WTC11 (cell line): ENCODE measurements at regions of chr4 and their contacts with region 1.

Region 1: GRCh38 chr4:54233277-54233696 is 4.2 kb downstream of the PDGFRA start:
- DNase-seq: peak; percentile 84
- ATAC-seq: peak; percentile 57
- H3K4me3 Mint-ChIP-seq: peak overlapping the region; percentile 82
- H3K27ac Mint-ChIP-seq: no peak overlapping the region
- H3K4me1 Mint-ChIP-seq: peaks cover 32% of the 10 kb centered on the region
- H3K27me3 Mint-ChIP-seq: peaks cover 76% of the 10 kb centered on the region
- CTCF ChIP-seq: peak; percentile 7; the same call in 1 of the 2 replicates

Region 2: DNA sequence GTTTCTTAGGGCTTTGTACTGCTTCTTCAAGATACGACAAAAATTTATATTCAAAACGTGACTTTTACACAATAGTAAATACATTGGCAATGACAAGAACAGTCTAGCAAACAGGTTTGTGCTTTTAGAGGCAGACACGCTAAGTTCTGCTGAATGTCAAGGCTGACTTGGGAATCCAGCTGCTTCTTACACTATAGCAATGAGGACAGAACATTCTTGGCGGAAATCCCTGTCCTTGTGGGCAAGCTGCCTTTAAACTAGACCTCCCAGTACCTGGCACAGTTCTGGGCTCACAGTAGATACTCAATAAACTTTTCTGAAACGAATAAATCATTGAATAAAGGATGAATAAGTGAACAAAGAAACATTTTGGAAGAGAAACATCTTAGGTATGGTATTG is 1223.0 kb before region 1 on chr4:
- CTCF ChIA-PET with region 1: interaction called, 15 read pairs
- POLR2A ChIA-PET with region 1: no interaction called
- DNase-seq: no peak
- ATAC-seq: no peak
- H3K4me3 Mint-ChIP-seq: no peak overlapping the region
- H3K27ac Mint-ChIP-seq: no peak overlapping the region
- H3K4me1 Mint-ChIP-seq: peaks cover 8% of the 10 kb centered on the region; the same call in 1 of the 2 replicates
- H3K27me3 Mint-ChIP-seq: no peaks in the 10 kb centered on the region; the same call in 1 of the 2 replicates
- CTCF ChIP-seq: no peak

Region 3: DNA sequence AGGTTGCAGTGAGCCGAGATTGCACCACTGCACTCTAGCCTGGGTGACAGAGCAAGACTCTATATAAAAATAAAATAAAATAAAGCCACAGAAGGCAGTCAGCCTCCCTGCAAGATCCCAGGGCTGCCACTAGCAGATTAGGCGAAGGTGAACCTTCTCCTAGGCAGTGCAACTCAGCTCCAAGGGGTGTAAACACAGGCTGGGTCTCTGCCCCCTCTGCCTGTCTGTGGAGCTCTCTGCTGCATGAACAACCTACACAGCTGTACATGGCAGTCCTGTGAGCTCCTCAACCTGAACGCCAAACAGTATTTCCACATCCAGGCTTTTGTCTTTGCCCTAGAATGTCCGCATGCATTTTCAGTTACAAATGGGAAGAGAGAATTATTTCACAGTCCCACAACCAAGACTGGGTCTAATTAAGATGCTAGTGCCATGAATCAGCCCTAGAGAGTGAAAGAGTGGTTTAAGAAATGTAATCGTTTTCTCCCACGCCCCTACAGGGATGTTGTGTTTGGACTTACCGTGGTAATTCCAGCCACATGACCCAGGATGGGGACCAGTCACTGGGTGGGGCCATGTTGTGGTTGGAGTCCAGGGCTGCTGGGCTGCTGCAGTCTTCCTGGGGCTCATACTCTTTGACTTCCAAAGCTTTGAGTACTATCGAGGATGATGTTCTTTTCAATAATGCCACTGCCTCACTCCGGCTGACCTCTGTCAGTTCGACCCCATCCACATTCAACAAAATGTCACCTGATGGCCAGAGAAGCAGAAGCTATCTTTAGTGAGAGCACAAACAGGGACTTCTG is 756.9 kb before region 1 on chr4:
- CTCF ChIA-PET with region 1: interaction called, 11 read pairs
- POLR2A ChIA-PET with region 1: no interaction called
- DNase-seq: no peak
- ATAC-seq: peak; percentile 54
- H3K4me3 Mint-ChIP-seq: peak overlapping the region; percentile 18
- H3K27ac Mint-ChIP-seq: peak overlapping the region; percentile 96
- H3K4me1 Mint-ChIP-seq: peaks cover 57% of the 10 kb centered on the region
- H3K27me3 Mint-ChIP-seq: no peaks in the 10 kb centered on the region
- CTCF ChIP-seq: no peak

Region 4: DNA sequence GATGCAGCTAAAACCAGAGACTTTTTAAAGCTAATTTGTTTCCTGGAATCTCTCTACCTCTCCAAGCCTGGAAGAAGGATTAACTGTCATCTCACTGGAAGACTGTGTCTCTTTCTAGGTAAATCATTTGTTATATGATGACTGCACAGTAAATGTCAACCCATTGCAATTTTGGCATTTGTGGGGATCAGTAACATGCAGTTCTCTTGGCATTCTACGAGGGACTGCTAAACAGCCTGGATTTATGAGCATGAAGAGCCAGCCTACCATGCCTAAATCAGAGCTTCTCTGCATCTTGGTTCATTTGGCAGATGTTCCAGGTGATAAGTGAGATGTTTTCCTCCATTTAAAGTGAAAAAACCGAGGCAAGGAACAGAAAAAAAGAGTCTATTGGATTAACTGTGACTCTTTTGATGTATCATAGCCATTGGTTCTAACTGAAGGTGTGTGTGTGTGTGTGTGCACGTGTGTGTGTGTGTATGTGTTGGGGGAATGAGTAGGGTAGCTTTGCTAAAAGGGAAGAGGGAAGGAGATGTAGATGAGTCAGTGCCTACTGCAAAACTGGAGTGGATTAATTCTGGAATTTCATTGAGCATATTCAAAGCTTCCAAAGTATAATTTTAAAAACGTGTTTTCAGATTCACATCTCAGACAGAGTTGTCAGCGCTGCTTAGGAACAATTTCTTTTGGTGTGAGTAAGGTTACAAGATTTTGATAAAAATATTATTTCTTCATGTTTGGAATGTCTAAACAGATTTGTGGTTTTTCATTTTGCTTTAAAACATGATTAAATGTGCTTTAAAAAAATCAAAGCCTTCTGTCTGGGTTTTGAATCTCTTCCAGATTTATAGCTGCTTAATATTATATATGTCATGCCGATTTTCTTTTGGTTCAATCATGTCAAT is 518.8 kb before region 1 on chr4:
- CTCF ChIA-PET with region 1: interaction called, 76 read pairs
- POLR2A ChIA-PET with region 1: no interaction called
- DNase-seq: no peak
- ATAC-seq: no peak
- H3K4me3 Mint-ChIP-seq: no peak overlapping the region
- H3K27ac Mint-ChIP-seq: no peak overlapping the region
- H3K4me1 Mint-ChIP-seq: peaks cover 15% of the 10 kb centered on the region
- H3K27me3 Mint-ChIP-seq: no peaks in the 10 kb centered on the region
- CTCF ChIP-seq: no peak

Region 5: GRCh38 chr4:53920116-53920515 is 313.2 kb before region 1 on chr4:
- CTCF ChIA-PET with region 1: interaction called, 111 read pairs
- POLR2A ChIA-PET with region 1: no interaction called
- DNase-seq: peak; percentile 13
- ATAC-seq: peak; percentile 78
- H3K4me3 Mint-ChIP-seq: no peak overlapping the region
- H3K27ac Mint-ChIP-seq: no peak overlapping the region
- H3K4me1 Mint-ChIP-seq: peaks cover 30% of the 10 kb centered on the region
- H3K27me3 Mint-ChIP-seq: peaks cover 4% of the 10 kb centered on the region
- CTCF ChIP-seq: no peak

Region 6: GRCh38 chr4:54107951-54108873 is 125.1 kb before region 1 on chr4:
- CTCF ChIA-PET with region 1: interaction called, 44 read pairs
- POLR2A ChIA-PET with region 1: no interaction called
- DNase-seq: no peak
- ATAC-seq: no peak
- H3K4me3 Mint-ChIP-seq: peak overlapping the region; percentile 71
- H3K27ac Mint-ChIP-seq: no peak overlapping the region; the same call in 1 of the 2 replicates
- H3K4me1 Mint-ChIP-seq: peaks cover 63% of the 10 kb centered on the region
- H3K27me3 Mint-ChIP-seq: peaks cover 93% of the 10 kb centered on the region
- CTCF ChIP-seq: no peak

Region 7: GRCh38 chr4:54525602-54526001 is 292.3 kb after region 1 on chr4:
- CTCF ChIA-PET with region 1: no interaction called
- POLR2A ChIA-PET with region 1: no interaction called
- DNase-seq: no peak
- ATAC-seq: no peak
- H3K4me3 Mint-ChIP-seq: no peak overlapping the region
- H3K27ac Mint-ChIP-seq: no peak overlapping the region
- H3K4me1 Mint-ChIP-seq: peaks cover 18% of the 10 kb centered on the region
- H3K27me3 Mint-ChIP-seq: no peaks in the 10 kb centered on the region
- CTCF ChIP-seq: no peak